PC-9 (cell line): ENCODE measurements at regions of chr12 and their contacts with region 1.

Region 1: DNA sequence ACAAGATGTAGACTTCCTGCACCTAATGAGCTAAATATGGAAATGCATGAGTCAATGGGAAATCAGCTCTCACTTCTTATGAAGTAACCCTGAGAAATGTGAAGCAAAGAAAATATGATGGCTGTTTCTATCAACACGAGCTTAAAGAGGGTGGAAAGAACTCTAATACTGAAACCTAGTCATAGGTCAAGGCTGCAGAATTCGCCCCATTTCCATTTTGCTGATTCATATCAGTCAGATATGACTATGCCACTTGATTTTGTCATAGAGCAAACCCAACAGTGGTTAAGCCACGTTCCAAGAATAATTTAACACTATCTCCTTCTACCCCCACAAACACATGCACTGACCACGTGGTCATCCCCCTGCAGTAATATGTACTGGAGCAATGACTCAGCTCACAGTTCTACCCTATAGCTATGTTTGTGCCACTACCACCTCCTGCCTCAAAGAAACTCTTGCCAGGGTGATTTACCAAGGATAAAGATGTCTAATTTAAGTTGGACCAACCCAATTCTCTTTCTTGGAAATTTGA is 157.5 kb downstream of the TMTC3 start:
- DNase-seq: peak; percentile 71 to 87
- H3K4me3 ChIP-seq: 0 out of 2 replicates have a peak overlapping the region, but pooled peaks have one; percentile 11
- H3K27ac ChIP-seq: peak overlapping the region; percentile 98
- H3K4me1 ChIP-seq: peaks cover 37% of the 10 kb centered on the region
- H3K27me3 ChIP-seq: no peaks in the 10 kb centered on the region
- CTCF ChIP-seq: no peak

Region 2: DNA sequence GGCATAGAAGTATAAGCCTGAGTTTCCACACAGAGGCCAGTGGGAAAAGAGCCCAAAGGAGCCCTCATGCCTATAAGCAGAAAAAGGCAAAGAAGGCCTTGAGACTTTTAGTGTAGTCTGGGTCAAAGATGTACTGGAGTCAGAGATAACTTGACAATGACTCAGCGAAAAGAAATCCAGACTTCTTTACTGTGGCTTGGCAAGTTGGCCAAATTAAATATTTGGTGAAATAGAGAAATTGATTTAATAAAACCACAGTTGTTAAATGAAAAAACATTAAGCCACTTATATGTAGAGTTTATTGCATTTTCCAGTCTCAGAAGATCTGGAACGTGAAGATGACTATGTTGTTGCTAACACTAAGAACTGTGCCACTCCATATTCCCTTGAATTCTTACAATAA is 52.4 kb before region 1 on chr12:
- CTCF ChIA-PET with region 1: no interaction called
- POLR2A ChIA-PET with region 1: no interaction called
- intact Hi-C with region 1: loop called (anchors 5 kb)
- DNase-seq: peak in 1 of 2 experiments; percentile 46
- H3K4me3 ChIP-seq: no peak overlapping the region
- H3K27ac ChIP-seq: no peak overlapping the region
- H3K4me1 ChIP-seq: peaks cover 8% of the 10 kb centered on the region
- H3K27me3 ChIP-seq: no peaks in the 10 kb centered on the region
- CTCF ChIP-seq: no peak

Region 3: GRCh38 chr12:88334271-88334670 is 34.6 kb after region 1 on chr12:
- CTCF ChIA-PET with region 1: no interaction called
- POLR2A ChIA-PET with region 1: no interaction called
- intact Hi-C with region 1: loop called (anchors 5 kb)
- DNase-seq: peak; percentile 36 to 56
- H3K4me3 ChIP-seq: no peak overlapping the region
- H3K27ac ChIP-seq: no peak overlapping the region
- H3K4me1 ChIP-seq: peaks cover 11% of the 10 kb centered on the region; the same call in 1 of the 2 replicates
- H3K27me3 ChIP-seq: no peaks in the 10 kb centered on the region
- CTCF ChIP-seq: no peak

Region 4: GRCh38 chr12:88553941-88554658 is 254.5 kb after region 1 on chr12:
- CTCF ChIA-PET with region 1: no interaction called
- POLR2A ChIA-PET with region 1: interaction called, 3 read pairs
- intact Hi-C with region 1: loop called (anchors 5 kb)
- DNase-seq: peak; percentile 26 to 54
- H3K4me3 ChIP-seq: no peak overlapping the region
- H3K27ac ChIP-seq: no peak overlapping the region
- H3K4me1 ChIP-seq: peaks cover 23% of the 10 kb centered on the region; the same call in 1 of the 2 replicates
- H3K27me3 ChIP-seq: no peaks in the 10 kb centered on the region
- CTCF ChIP-seq: no peak